Right ventricle myocardium superior (tissue), 1 donor: ENCODE measurements at regions of chr15 and their contacts with region 1.

Region 1: DNA sequence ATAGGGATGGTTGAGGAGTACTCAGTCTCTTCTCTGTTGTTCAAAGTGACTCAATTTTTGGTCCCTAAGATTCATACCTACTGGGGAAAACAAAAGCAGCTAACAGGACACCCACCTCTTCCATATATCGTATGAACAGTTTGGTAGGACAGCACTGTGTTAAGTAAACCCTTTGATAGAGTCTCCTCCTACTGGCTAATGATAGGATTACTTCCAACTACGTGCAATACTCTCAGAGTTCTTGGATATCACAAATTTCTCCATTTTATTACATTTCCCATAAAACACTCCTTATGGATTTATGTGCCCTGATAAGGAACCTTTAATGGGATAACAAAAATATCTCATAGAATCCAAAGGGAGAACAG is 200.2 kb upstream of the GOLGA6L4 start:
- DNase-seq: no peak
- ATAC-seq: peak; percentile 77

Region 2: DNA sequence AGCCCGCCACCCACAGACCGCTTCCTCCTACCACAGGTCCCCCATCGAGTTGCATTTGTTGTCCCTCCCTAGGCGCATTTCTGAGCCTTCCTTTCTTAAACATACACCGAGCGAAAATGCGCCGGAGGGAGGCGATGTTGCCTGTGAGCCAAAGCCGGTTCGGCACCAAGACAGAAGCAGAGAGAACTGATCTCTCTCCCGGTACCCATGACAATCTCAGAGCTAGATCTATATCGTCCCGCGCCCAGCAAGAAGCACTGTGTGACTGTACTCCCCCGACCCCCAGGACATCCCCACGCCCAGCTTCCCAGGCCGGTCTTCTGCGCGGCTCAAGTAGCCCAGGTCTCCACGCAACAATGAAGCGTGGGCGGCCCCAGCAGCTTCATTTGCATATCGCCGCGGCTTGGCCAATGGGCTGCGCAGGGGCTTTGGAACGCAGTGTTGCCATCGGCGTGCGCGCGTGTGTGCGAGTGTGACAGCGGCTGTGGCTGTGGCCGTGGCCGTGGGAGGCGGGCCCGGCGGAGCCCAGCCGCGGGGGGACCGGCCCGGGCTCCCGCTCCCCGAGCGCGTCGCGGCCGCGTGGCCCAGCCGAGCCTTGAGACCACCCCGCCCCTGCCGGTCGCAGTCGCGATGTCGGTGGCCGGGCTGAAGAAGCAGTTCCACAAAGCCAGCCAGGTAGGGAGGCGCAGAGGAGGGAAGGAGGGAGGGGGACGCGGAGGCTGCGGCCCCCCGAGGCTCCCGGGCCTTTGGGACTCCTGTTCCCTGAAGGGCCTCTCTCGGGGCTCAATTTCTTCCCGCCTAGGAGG is 588.3 kb before region 1 on chr15 and contains the start of gene SH3GL3:
- intact Hi-C with region 1: loop called (anchors 10 kb)
- DNase-seq: peak; percentile 90
- ATAC-seq: peak; percentile 99
- total RNA-seq, gene SH3GL3: not detected

Region 3: DNA sequence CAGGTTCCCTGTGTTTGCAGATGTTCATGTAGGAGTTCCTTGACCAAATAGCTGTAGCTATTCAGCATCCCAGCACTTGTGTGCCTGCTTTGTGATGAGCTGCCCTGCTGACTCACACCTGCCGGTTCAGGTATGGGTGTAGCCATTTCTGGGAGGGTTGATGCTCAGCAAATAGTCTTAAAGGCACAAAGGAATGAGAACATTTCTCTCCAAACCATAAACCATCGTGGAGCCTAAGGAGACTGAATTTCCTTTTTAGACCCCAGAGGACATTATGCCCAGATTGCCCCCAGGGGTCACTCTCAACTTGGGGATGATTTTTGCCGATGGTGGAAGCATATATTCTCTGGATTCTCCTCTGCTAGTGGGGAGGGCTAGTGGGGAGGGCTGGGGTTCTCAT is 300.9 kb before region 1 on chr15:
- intact Hi-C with region 1: loop called (anchors 2 kb)
- DNase-seq: no peak
- ATAC-seq: peak; percentile 49